ENCODE measurements at regions of chr2 and their contacts with region 1.

Region 1: DNA sequence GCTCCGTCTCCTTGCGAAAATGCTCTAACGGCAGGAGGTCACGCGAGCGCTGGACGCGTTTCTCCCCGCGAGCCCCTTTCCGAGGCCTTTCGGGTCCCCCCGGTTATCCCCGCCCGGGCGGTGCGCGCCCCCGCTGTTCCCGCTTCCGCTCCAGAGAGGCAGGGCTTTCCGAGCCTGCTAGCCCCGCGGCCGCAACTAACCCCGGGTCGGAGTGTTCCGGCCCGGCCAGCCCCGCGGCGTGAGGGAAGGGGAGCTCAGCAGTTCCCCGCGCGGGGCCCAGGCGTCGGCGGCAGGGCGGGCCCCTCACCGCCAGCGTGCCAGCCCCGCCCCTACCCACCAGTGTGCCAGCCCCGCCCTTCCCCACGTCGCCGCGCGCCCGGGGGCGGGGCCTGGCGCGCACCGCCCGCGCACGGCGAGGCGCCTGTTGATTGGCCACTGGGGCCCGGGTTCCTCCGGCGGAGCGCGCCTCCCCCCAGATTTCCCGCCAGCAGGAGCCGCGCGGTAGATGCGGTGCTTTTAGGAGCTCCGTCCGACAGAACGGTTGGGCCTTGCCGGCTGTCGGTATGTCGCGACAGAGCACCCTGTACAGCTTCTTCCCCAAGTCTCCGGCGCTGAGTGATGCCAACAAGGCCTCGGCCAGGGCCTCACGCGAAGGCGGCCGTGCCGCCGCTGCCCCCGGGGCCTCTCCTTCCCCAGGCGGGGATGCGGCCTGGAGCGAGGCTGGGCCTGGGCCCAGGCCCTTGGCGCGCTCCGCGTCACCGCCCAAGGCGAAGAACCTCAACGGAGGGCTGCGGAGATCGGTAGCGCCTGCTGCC is at the start of gene MSH6:
- DNase-seq: peak; percentile 49 to 93
- H3K4me3 ChIP-seq: peak within 1 kb of the TSS; percentile 98 to 100
- H3K27ac ChIP-seq: peak within 1 kb of the TSS; percentile 89 to 96
- H3K4me1 ChIP-seq: peaks cover 0 to 16% of the 10 kb centered on the region in 2 donors
- H3K27me3 ChIP-seq: no peaks in the 10 kb centered on the region
- CTCF ChIP-seq: no peak
- total RNA-seq, gene MSH6: 11.8 TPM

Region 2: GRCh38 chr2:47437287-47437686 is 345.6 kb before region 1 on chr2:
- intact Hi-C with region 1: loop called (anchors 5 kb)
- DNase-seq: no peak
- H3K4me3 ChIP-seq: no peak overlapping the region
- H3K27ac ChIP-seq: no peak overlapping the region
- H3K4me1 ChIP-seq: peaks cover 0 to 7% of the 10 kb centered on the region in 2 donors
- H3K27me3 ChIP-seq: no peaks in the 10 kb centered on the region
- CTCF ChIP-seq: peak in 2 of 3 experiments; percentile 55 to 64

Region 3: GRCh38 chr2:47906157-47907038 is 123.5 kb after region 1 on chr2 and contains the start of gene FBXO11:
- intact Hi-C with region 1: loop called (anchors 1 kb)
- DNase-seq: peak; percentile 96 to 99
- H3K4me3 ChIP-seq: peak within 1 kb of the TSS; percentile 99 to 100
- H3K27ac ChIP-seq: peak within 1 kb of the TSS; percentile 99 to 100
- H3K4me1 ChIP-seq: peaks cover 0 to 12% of the 10 kb centered on the region in 2 donors
- H3K27me3 ChIP-seq: no peaks in the 10 kb centered on the region
- CTCF ChIP-seq: peak; percentile 53 to 67 (median 65)
- total RNA-seq, gene FBXO11: 15.1 TPM

Region 4: DNA sequence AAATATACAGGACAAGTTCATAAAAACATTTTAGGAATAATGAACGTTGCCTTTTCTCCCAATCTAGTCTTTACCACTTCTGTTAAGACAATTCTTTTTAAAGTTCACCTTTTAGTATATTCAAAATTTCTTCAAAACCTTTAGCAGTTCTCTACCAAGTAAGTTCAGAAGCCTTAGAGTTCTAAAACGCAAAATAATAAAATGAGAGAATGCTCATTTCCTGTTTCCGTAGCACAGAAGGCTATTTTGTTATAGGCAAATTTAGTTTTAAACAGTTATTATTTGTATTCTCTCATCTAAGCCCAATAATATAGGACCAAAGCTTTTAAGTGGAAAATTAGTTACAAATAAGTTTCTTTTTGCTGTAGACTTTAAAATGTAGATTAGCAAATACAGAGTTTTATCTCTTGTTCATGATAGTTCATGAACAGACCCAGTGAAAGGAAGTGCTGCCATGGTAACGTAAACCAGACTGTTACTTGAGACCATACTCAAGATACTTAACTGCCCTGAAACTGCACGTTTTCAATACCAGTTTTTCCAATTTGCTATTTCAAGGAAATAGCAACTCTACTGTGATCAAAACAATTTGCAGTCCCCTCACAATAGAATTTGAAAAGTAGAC is 573.9 kb after region 1 on chr2:
- intact Hi-C with region 1: loop called (anchors 10 kb)
- DNase-seq: no peak
- H3K4me3 ChIP-seq: no peak overlapping the region
- H3K27ac ChIP-seq: no peak overlapping the region
- H3K4me1 ChIP-seq: peaks cover 0 to 17% of the 10 kb centered on the region in 2 donors
- H3K27me3 ChIP-seq: no peaks in the 10 kb centered on the region
- CTCF ChIP-seq: no peak

Measured in ascending aorta (tissue), 2 donors.